ENCODE measurements at regions of chr5 and their contacts with region 1.

Region 1: DNA sequence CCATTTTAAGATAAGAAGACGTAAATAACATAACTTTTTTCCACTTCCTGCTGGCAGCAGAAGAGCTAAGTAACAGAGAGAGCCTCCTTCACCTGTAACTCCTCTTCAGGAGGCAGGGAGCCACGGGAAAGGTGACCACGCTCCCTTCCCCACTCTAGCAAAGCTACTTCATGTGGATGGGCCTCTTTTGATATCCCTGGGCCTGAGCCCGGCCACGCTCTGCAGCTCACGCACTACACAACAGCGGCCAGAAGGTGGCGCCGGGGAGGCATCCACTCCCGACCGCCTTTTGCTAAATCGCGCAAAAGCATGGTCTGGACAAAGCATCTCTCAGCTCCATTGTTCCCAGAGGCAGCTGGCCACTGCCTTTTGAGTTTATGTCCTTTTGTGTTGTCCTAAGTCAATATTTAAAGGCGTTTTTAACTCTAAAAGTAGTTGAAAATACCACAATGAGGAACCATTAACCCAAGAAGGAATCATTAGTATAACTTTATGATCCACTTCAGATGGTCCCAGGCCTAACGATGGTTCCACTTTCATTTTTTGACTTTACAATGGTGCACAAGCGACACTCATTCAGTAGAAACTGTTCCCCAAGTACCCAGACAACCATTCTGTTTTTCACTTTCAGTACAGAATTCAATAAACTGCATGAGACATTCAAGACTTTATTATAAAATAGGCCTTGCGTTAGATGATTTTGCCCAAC is 23.6 kb downstream of the CMBL start:
- DNase-seq: no peak
- H3K4me3 ChIP-seq: no peak overlapping the region
- H3K27ac ChIP-seq: no peak overlapping the region
- H3K27me3 ChIP-seq: no peaks in the 10 kb centered on the region
- CTCF ChIP-seq: peak; percentile 99

Region 2: GRCh38 chr5:10268100-10268499 is 16.0 kb before region 1 on chr5:
- CTCF ChIA-PET with region 1: interaction called, 14 read pairs
- POLR2A ChIA-PET with region 1: no interaction called
- DNase-seq: no peak
- H3K4me3 ChIP-seq: no peak overlapping the region
- H3K27ac ChIP-seq: no peak overlapping the region
- H3K27me3 ChIP-seq: no peaks in the 10 kb centered on the region
- CTCF ChIP-seq: no peak

Region 3: DNA sequence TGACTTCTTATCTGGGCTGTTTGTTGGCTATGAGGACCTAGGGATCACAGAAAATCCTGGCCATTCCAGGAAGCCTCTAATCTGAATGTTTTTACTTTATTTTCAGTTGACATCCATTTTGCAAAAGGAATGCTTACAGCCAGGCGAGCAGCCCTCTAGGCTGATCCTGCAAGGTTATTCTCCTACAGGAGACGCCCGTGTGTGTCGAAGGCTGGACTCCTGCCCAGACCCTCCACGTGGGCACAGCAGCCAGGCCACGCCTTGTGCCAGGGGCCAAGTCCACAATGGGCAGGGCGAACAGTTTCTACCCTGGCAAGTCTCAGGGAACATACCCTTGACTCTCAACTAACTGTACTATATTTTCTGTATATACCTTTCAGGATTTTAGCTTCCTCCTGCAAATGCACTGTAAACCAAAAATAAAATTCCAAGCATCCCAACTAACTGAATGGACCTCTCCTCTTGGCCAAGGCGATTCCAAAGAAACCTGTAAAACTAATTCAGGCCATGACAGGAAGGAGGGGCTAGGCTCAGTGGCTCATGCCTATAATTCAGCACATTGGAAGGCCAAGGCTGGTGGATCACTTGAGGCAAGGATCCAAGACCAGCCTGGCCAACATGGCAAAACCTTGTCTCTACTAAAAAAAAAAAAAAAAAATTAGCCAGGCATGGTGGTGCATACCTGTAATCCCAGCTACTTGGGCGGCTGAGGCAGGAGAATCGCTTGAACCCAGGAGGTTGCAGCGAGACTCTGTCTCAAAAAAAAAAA is 17.9 kb after region 1 on chr5:
- CTCF ChIA-PET with region 1: interaction called, 10 read pairs
- POLR2A ChIA-PET with region 1: interaction called, 3 read pairs
- DNase-seq: no peak
- H3K4me3 ChIP-seq: no peak overlapping the region
- H3K27ac ChIP-seq: no peak overlapping the region
- H3K27me3 ChIP-seq: no peaks in the 10 kb centered on the region
- CTCF ChIP-seq: no peak

Region 4: GRCh38 chr5:10353241-10354047 is 69.4 kb after region 1 on chr5 and contains the start of gene MARCHF6:
- CTCF ChIA-PET with region 1: interaction called, 10 read pairs
- POLR2A ChIA-PET with region 1: interaction called, 15 read pairs
- DNase-seq: peak; percentile 66
- H3K4me3 ChIP-seq: peak within 1 kb of the TSS; percentile 82
- H3K27ac ChIP-seq: peak within 1 kb of the TSS; percentile 98
- H3K27me3 ChIP-seq: no peaks in the 10 kb centered on the region
- CTCF ChIP-seq: no peak
- polyA plus RNA-seq, gene MARCHF6: 102 and 136 TPM in 2 replicates

Region 5: DNA sequence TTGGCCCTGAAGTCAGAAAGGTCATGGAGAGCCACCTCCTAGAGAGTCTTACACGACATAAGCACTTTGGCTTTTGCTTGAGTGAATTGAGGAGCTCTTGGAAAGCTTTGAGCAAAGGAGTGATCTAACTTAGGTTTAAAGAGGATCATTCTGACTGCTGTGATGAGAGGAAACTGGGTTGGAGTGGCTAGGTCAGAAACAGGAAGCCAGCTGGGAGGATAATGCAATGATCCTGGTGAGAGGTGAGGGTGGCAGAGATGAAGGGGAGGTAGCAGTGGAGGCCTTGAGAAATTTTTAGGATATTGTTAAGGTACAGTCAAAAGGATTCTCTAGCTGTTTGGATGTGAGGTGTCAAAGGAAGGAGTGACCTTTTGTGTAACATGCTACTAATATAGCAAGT is 125.4 kb after region 1 on chr5:
- CTCF ChIA-PET with region 1: interaction called, 15 read pairs
- POLR2A ChIA-PET with region 1: no interaction called
- DNase-seq: no peak
- H3K4me3 ChIP-seq: no peak overlapping the region
- H3K27ac ChIP-seq: no peak overlapping the region
- H3K27me3 ChIP-seq: no peaks in the 10 kb centered on the region
- CTCF ChIP-seq: no peak

Region 6: DNA sequence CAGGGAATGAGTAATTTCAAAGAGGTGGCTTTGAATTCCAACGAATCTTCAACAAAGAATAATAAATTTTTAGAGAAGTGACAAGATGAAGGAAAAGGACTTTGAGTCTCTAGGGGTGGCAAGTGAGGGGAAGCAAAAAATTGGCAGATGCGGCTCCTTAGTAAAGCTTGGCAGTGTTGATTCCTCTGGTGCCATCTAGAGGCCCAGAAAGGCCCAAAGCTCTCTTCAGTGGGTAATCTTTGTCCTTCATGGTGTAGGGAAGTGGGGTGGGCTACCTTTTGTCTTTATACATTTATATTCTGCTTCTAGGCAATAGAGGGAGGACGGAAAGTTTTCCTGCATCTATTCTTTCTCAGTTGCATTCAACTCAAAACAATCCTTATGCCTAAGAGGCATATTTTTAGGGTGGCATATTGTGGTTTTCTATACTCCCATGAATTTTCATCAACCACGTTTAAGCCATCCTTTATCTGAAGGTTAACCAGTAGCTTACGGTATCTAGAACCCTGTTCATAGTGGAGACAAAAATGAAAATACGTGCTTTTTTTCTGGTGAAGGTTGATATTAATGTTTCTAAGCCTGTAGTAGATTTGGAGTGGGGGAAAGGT is 140.1 kb after region 1 on chr5:
- CTCF ChIA-PET with region 1: interaction called, 84 read pairs
- POLR2A ChIA-PET with region 1: no interaction called
- DNase-seq: no peak
- H3K4me3 ChIP-seq: no peak overlapping the region
- H3K27ac ChIP-seq: no peak overlapping the region
- H3K27me3 ChIP-seq: no peaks in the 10 kb centered on the region
- CTCF ChIP-seq: peak; percentile 65